Activated naive CD4-positive, alpha-beta T cell treated with anti-CD3 and anti-CD28 coated beads for 36 hours (primary cell): ENCODE measurements at regions of chr20 and their contacts with region 1.

Region 1: GRCh38 chr20:2470423-2471193 is at the start of gene SNRPB:
- DNase-seq: peak; percentile 98
- H3K4me3 Mint-ChIP-seq: peak within 1 kb of the TSS; percentile 99
- H3K27ac Mint-ChIP-seq: peak within 1 kb of the TSS; percentile 100
- H3K4me1 Mint-ChIP-seq: peaks cover 52% of the 10 kb centered on the region
- H3K27me3 Mint-ChIP-seq: no peaks in the 10 kb centered on the region
- total RNA-seq, gene SNRPB: 422 to 431 TPM

Region 2: DNA sequence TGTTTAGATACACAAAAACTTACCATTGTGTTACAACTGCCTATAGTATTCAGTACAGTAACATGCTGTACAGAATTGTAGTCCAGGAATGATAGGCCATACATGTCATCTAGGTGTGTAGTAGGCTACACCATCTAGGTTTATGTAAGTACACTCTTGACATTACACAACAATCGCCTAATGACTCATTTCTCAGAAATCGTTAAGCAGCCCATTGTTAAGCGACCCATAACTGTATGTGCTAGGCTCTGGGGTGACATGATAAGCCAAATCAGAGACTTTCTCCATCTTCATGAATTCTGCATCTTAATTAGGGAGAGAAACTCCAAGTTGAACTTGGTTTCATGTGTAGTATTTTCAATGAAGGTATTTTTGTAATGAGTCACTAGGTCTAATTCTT is 351.8 kb before region 1 on chr20:
- CTCF ChIA-PET with region 1: no interaction called
- intact Hi-C with region 1: loop called (anchors 1 kb)
- DNase-seq: peak; percentile 50
- H3K4me3 Mint-ChIP-seq: peak overlapping the region; percentile 41
- H3K27ac Mint-ChIP-seq: peak overlapping the region; percentile 94
- H3K4me1 Mint-ChIP-seq: peaks cover 86% of the 10 kb centered on the region
- H3K27me3 Mint-ChIP-seq: no peaks in the 10 kb centered on the region

Region 3: DNA sequence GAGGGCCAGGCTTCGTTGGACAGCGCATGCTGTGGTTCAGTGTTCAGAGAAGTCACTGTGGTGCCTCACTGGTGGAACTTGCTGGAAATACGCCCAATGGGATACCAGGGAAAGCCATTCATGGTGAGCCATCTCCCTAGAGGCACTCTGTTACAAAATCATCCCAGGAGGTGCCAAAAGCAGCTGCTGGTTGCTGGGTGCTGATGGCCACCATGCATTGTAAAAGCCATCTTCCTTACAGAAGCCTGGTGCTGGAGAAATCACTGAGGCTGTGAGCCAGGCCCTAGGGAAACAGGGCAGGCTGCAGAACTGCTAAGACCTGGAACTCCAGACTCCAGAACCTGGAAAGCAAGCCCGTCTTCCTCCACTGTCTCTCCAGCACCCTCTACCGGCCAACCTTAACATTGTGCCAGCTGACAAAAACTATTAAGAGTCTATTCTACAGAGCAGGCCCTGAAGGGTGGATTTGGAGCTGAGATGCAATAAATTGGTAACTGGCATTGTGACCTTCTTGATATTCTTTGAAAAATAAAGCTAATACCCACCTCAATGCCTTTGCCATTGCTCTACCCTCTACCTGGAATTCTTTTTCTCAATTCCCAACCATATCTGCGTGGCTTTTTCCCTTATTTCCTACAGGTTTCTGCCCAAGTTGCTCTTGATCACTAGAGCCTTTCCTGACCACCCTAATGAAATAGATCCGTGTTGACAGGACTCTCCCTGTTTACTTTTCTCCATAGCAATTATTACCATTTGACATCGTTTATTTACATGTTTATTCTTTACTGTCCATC is 18.5 kb before region 1 on chr20:
- CTCF ChIA-PET with region 1: interaction called, 16 read pairs
- intact Hi-C with region 1: loop called (anchors 2 kb)
- DNase-seq: peak; percentile 85
- H3K4me3 Mint-ChIP-seq: no peak overlapping the region
- H3K27ac Mint-ChIP-seq: no peak overlapping the region
- H3K4me1 Mint-ChIP-seq: peaks cover 37% of the 10 kb centered on the region
- H3K27me3 Mint-ChIP-seq: no peaks in the 10 kb centered on the region

Region 4: DNA sequence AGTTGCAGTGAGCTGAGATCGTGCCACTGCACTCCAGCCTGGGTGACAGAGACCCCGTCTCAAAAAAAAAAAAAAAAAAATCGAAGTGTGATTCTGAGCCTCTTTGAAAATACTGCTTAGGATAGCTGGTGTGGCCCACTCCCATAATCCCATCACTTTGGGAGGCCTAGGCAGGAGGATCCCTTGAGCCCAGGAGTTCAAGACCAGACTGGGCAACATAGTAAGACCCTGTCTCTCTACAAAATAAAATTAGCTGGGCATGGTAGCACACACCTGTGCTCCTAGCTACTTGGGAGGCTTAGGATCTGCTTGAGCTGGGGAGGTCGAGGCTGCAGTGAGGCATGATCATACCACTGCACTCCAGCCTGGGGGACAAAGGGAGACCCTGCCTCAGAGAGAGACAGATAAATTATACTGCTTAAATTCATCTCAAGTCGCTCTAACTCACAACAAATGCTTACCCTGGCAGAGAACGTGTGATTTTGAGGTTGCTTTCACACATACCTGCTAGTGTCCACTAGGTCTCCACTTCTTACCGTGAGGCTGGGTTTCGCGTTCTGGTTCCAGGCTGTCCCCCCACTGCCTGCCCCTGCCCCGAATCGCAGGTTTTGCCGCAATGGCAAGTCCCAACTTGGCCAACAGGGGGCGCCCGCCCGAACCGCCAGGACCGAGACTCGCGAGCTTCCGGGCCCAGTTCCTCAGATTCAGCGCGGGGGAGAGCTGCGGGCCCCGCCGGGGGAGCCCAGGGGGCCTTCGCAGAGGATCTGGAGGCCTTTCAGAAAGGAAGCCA is 53.5 kb after region 1 on chr20:
- CTCF ChIA-PET with region 1: interaction called, 8 read pairs
- intact Hi-C with region 1: loop called (anchors 1 kb)
- DNase-seq: peak; percentile 94
- H3K4me3 Mint-ChIP-seq: peak overlapping the region; percentile 86
- H3K27ac Mint-ChIP-seq: no peak overlapping the region
- H3K4me1 Mint-ChIP-seq: peaks cover 5% of the 10 kb centered on the region
- H3K27me3 Mint-ChIP-seq: no peaks in the 10 kb centered on the region

Region 5: GRCh38 chr20:2663887-2664719 is 193.5 kb after region 1 on chr20 and contains the start of gene IDH3B:
- CTCF ChIA-PET with region 1: no interaction called
- intact Hi-C with region 1: loop called (anchors 1 kb)
- DNase-seq: peak; percentile 96
- H3K4me3 Mint-ChIP-seq: peak within 1 kb of the TSS; percentile 95
- H3K27ac Mint-ChIP-seq: peak within 1 kb of the TSS; percentile 97
- H3K4me1 Mint-ChIP-seq: peaks cover 21% of the 10 kb centered on the region
- H3K27me3 Mint-ChIP-seq: no peaks in the 10 kb centered on the region
- total RNA-seq, gene IDH3B: 123 to 125 TPM